IMR-90 (cell line): ENCODE measurements at regions of chr4 and their contacts with region 1.

Region 1: GRCh38 chr4:121656269-121656641 is 40.5 kb downstream of the ANXA5 start:
- DNase-seq: peak; percentile 79
- ATAC-seq: peak; percentile 94
- H3K4me3 ChIP-seq: no peak overlapping the region
- H3K27ac ChIP-seq: no peak overlapping the region
- H3K4me1 ChIP-seq: no peaks in the 10 kb centered on the region
- H3K27me3 ChIP-seq: no peaks in the 10 kb centered on the region
- CTCF ChIP-seq: peak; percentile 63
- POLR2A ChIP-seq: no peak
- RAD21 ChIP-seq: peak; percentile 58

Region 2: GRCh38 chr4:121370729-121371325 is 285.4 kb before region 1 on chr4:
- CTCF ChIA-PET with region 1: interaction called, 5 read pairs
- POLR2A ChIA-PET with region 1: no interaction called
- dilution Hi-C with region 1: no loop called
- in situ Hi-C with region 1: no loop called
- intact Hi-C with region 1: loop called (anchors 2 kb)
- DNase-seq: peak; percentile 33
- ATAC-seq: peak; percentile 84
- H3K4me3 ChIP-seq: no peak overlapping the region
- H3K27ac ChIP-seq: no peak overlapping the region
- H3K4me1 ChIP-seq: no peaks in the 10 kb centered on the region
- H3K27me3 ChIP-seq: no peaks in the 10 kb centered on the region; the same call in 1 of the 2 replicates
- CTCF ChIP-seq: peak; percentile 64
- POLR2A ChIP-seq: no peak
- RAD21 ChIP-seq: peak; percentile 50

Region 3: DNA sequence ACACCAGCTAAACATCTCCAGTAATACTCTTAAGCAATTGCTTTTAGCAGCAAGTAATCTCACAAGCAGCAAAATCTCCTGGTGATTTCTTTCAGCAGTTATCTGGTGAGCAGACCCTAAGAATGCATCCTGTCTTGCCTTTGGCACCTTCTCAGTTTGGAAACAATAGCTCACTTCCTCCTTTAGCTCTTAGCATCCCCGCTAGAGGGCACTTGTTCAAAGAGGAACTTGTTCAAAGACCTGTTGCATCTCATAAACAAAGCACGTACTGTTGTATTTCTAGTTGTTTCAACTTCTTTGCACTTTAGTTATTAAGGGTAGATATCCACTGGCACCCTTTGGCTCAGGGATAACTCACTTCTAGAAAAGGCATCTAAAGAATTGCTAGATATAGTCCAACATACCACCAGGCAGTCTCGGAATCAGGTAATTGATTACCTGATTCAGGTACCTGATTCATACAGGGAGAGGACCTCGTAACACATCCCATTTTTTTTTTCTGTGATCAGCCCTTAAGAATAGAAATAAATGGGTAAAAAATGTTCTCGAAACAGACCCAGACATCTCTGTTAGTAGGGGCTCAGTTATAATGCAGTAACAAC is 193.5 kb before region 1 on chr4:
- CTCF ChIA-PET with region 1: interaction called, 3 read pairs
- POLR2A ChIA-PET with region 1: no interaction called
- dilution Hi-C with region 1: no loop called
- in situ Hi-C with region 1: no loop called
- intact Hi-C with region 1: loop called (anchors 5 kb)
- DNase-seq: peak; percentile 61
- ATAC-seq: peak; percentile 70
- H3K4me3 ChIP-seq: no peak overlapping the region
- H3K27ac ChIP-seq: no peak overlapping the region
- H3K4me1 ChIP-seq: no peaks in the 10 kb centered on the region
- H3K27me3 ChIP-seq: peaks cover 2% of the 10 kb centered on the region
- CTCF ChIP-seq: peak; percentile 65
- POLR2A ChIP-seq: no peak
- RAD21 ChIP-seq: peak; percentile 59

Region 4: DNA sequence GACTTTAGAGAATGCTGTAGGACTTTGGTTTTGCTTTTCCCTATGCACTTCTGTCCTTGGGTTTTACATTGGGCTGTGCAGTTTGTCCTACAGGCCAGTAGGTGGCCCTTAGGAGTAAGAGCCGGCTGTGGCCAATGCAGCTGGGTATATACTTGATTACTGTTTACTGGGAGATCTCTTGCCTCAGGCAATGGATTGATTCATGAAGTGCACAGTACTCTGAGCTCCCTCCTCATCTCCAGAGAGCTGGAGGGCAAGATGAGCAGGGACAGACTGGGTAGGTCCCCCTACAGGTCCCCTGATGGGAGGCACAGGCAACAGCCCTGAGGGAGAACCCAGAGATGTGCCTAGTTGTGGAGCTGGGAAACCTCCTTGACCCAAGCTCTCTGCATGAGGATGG is 171.6 kb before region 1 on chr4:
- CTCF ChIA-PET with region 1: no interaction called
- POLR2A ChIA-PET with region 1: no interaction called
- dilution Hi-C with region 1: no loop called
- in situ Hi-C with region 1: loop called (anchors 10 kb)
- intact Hi-C with region 1: loop called (anchors 2 kb)
- DNase-seq: peak; percentile 66
- ATAC-seq: peak; percentile 100
- H3K4me3 ChIP-seq: no peak overlapping the region
- H3K27ac ChIP-seq: no peak overlapping the region
- H3K4me1 ChIP-seq: no peaks in the 10 kb centered on the region
- H3K27me3 ChIP-seq: peaks cover 2% of the 10 kb centered on the region; the same call in 1 of the 2 replicates
- CTCF ChIP-seq: peak; percentile 79
- POLR2A ChIP-seq: no peak
- RAD21 ChIP-seq: peak; percentile 75